Ovary (tissue), 10 donors: ENCODE measurements at regions of chr11 and their contacts with region 1.

Region 1: GRCh38 chr11:47355283-47356128 is 3.0 kb upstream of the MYBPC3 start:
- DNase-seq: peak; percentile 91 to 97 (median 94)
- H3K4me3 ChIP-seq: peak overlapping the region; percentile 49
- H3K27ac ChIP-seq: peak overlapping the region in 1 of 2 donors; percentile 72
- H3K4me1 ChIP-seq: peaks cover 2% of the 10 kb centered on the region
- H3K27me3 ChIP-seq: no peaks in the 10 kb centered on the region
- CTCF ChIP-seq: peak; percentile 87 to 96 (median 93)
- EP300 ChIP-seq: no peak
- POLR2A ChIP-seq: no peak

Region 2: DNA sequence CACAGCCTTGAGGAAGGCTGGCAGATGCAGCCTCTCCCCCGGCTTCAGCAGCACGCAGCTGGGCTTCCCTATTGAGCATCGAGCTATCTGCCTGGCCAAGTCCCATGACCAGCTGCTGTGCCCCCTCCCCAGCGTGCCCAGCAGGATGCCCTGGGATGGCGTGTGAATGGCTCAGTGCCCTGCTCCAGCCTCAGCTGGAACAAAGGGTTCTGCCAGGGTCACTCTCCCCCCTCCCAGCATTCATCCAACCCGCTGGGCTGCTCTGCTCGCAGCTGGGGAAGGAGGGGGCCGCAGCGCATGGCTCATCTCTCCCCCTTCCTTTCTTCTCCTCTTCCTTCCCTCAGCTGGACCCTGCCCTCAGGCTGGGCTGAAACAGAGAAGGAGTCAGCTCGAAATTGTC is 451.7 kb before region 1 on chr11:
- intact Hi-C with region 1: loop called in 2 of 4 experiments (anchors 5 to 10 kb)
- DNase-seq: peak in 1 of 5 donors; percentile 14
- H3K4me3 ChIP-seq: no peak overlapping the region
- H3K27ac ChIP-seq: no peak overlapping the region
- H3K4me1 ChIP-seq: peaks cover 3% of the 10 kb centered on the region
- H3K27me3 ChIP-seq: no peaks in the 10 kb centered on the region
- CTCF ChIP-seq: no peak
- EP300 ChIP-seq: no peak
- POLR2A ChIP-seq: no peak

Region 3: GRCh38 chr11:47176328-47177228 is 178.9 kb before region 1 on chr11 and contains the start of gene ARFGAP2:
- intact Hi-C with region 1: loop called in 3 of 4 experiments (anchors 5 to 10 kb)
- DNase-seq: peak; percentile 96 to 98 (median 96)
- H3K4me3 ChIP-seq: peak within 1 kb of the TSS; percentile 95
- H3K27ac ChIP-seq: peak within 1 kb of the TSS; percentile 97 to 98
- H3K4me1 ChIP-seq: peaks cover 13% of the 10 kb centered on the region
- H3K27me3 ChIP-seq: no peaks in the 10 kb centered on the region
- CTCF ChIP-seq: peak in 1 of 3 donors; percentile 10
- EP300 ChIP-seq: no peak
- POLR2A ChIP-seq: peak; percentile 62
- total RNA-seq, gene ARFGAP2: 66.0 to 94.9 (median 75.2) TPM

Region 4: DNA sequence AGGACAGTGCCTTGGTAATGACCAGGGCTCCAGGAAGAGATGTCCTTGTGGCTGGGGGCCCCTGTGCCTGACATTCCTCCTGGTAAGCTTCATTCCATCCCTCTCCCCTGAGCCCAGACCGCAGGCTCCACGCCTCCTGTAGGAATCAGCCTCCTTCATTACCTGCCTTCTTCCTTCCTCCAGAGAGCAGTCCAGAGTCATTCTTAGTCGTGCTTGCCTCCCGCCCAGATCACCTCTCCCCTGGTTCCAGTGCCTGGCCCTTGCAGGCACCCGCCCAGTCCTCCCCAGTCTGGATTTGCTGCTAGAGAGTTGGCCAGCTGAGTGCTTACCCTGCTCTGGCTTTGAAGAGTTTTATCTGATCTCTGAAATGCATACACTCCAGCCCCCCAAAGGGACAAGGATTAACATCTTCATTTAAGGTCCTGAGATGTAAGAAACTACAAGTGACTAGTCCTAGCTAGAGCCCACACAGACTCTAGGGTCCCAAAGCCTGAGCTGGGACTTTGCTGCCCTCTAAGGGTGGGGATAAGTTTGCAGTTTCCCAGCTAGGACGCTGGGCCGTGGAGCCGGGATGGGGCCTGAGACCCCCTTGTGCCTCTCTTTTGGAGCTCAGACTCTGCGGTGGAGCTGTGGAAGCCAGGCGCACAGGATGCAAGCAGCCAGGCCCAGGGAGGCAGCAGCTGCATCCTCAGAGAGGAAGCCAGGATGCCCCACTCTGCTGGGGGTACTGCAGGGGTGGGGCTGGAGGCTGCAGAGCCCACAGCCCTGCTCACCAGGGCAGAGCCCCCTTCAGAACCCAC is 96.1 kb before region 1 on chr11:
- intact Hi-C with region 1: loop called in 2 of 4 experiments (anchors 10 kb)
- DNase-seq: no peak
- H3K4me3 ChIP-seq: no peak overlapping the region
- H3K27ac ChIP-seq: no peak overlapping the region
- H3K4me1 ChIP-seq: peaks cover 10% of the 10 kb centered on the region
- H3K27me3 ChIP-seq: no peaks in the 10 kb centered on the region
- CTCF ChIP-seq: no peak
- EP300 ChIP-seq: no peak
- POLR2A ChIP-seq: no peak